ENCODE measurements at regions of chr12 and their contacts with region 1.

Region 1: GRCh38 chr12:10501031-10501430 is 4.7 kb upstream of the EIF2S3B start:
- DNase-seq: peak in 1 of 2 donors; percentile 31
- ATAC-seq: no peak
- H3K4me3 ChIP-seq: no peak overlapping the region
- H3K4me3 Mint-ChIP-seq: no peak overlapping the region
- H3K27ac ChIP-seq: no peak overlapping the region
- H3K27ac Mint-ChIP-seq: no peak overlapping the region
- H3K4me1 ChIP-seq: peaks cover 7% of the 10 kb centered on the region
- H3K4me1 Mint-ChIP-seq: peaks cover 28% of the 10 kb centered on the region in 2 donors
- H3K27me3 ChIP-seq: no peaks in the 10 kb centered on the region
- H3K27me3 Mint-ChIP-seq: peaks cover 0 to under 1% of the 10 kb centered on the region in 2 donors
- CTCF ChIP-seq: peak; percentile 28

Region 2: DNA sequence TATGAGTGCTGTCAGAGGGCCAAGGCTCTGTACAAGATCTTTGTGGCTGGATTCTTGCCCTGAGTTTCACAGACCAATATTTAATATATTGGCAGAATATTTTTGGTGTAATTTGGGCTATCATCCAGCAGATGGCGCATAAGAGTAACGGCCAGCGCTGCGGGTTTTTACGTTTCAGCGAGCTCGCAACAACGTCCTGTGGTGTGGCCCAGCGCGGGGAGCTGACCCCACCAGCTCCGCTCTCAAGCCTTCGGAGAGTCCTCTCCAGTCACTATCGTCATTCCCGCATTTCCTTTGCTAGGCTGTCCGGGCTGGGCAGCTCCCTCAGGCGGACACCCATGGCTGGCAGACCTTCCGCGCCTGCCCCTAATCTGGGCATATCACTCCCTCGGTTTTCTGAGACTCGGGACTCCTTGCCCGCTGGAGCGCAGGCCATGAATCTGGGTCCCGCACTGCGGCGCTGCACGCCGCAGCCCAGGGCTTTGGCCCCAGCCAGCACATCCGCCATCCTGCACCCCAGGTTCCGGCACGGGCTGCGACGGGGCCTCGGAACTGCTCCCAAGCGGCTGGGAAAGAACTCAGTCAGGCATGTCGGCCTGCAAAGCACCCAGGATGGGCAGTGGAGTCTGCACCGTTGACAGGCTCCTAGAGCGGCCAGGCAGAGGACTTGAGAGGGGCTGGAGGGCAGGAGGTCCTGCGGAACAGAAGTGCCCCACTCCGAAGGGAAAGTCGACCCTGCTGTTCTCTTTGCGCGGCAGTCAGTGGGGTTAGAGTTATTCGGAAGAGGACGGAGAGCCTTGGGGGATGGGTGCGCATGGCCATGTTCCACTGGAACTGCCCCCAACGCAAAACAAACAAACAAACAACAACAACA is 347.5 kb before region 1 on chr12:
- intact Hi-C with region 1: loop called (anchors 1 kb)
- DNase-seq: peak; percentile 61 to 79
- ATAC-seq: peak; percentile 83 to 90 (median 88)
- H3K4me3 ChIP-seq: peak overlapping the region; percentile 64
- H3K4me3 Mint-ChIP-seq: peak overlapping the region; percentile 92
- H3K27ac ChIP-seq: peak overlapping the region; percentile 26
- H3K27ac Mint-ChIP-seq: peak overlapping the region in 1 of 2 donors; percentile 85
- H3K4me1 ChIP-seq: peaks cover 14% of the 10 kb centered on the region
- H3K4me1 Mint-ChIP-seq: peaks cover 15% of the 10 kb centered on the region in 2 donors
- H3K27me3 ChIP-seq: peaks cover 3% of the 10 kb centered on the region
- H3K27me3 Mint-ChIP-seq: peaks cover 7 to 11% of the 10 kb centered on the region in 2 donors
- CTCF ChIP-seq: peak; percentile 86

Region 3: DNA sequence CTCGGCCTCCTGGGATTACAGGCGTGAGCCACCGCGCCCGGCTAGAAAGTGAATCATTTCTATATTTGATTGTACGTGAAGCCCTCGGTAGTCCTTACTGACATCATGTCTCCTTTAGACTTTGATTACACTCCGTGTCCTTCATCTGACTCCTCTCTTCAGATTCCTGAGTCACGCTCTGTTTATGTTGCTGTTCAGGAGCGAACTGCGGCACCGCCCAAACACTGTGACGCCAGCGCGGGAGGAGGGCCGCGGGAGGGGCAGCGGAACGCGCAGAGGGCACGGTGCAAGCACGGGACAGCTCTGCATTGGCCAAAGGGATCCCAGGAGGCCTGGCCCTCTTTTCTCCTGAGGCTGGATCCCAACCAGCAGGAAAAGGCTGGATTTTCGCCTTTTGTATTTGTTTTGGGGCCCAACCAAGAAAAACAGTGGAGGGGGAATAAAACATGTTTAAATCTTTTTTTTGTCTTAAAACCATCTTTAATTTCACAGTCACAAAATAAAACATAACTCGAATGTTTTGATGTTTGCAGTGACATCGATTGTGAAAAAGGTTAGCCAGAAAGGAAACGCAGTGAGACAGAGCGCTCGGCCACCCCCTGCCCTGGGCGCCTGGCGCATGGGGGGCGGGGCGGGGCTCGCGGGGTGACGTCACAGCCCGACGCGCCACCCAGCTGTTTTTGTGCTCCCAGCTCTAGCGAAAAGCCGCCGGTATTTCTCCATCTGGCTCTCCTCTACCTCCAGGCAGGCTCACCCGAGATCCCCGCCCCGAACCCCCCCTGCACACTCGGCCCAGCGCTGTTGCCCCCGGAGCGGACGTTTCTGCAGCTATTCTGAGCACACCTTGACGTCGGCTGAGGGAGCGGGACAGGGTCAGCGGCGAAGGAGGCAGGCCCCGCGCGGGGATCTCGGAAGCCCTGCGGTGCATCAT is 288.6 kb before region 1 on chr12 and contains the start of gene GABARAPL1:
- intact Hi-C with region 1: loop called (anchors 5 kb)
- DNase-seq: peak; percentile 88 to 92
- ATAC-seq: peak; percentile 68 to 85 (median 72)
- H3K4me3 ChIP-seq: peak within 1 kb of the TSS; percentile 97
- H3K4me3 Mint-ChIP-seq: peak within 1 kb of the TSS; percentile 95
- H3K27ac ChIP-seq: peak within 1 kb of the TSS; percentile 99
- H3K27ac Mint-ChIP-seq: peak within 1 kb of the TSS; percentile 91 to 97
- H3K4me1 ChIP-seq: peaks cover 38% of the 10 kb centered on the region
- H3K4me1 Mint-ChIP-seq: peaks cover 32 to 34% of the 10 kb centered on the region in 2 donors
- H3K27me3 ChIP-seq: no peaks in the 10 kb centered on the region
- H3K27me3 Mint-ChIP-seq: no peaks in the 10 kb centered on the region
- CTCF ChIP-seq: no peak
- total RNA-seq, gene GABARAPL1: 157 to 233 (median 160) TPM

Region 4: GRCh38 chr12:10235761-10236631 is 265.0 kb before region 1 on chr12:
- intact Hi-C with region 1: loop called (anchors 5 kb)
- DNase-seq: peak; percentile 53 to 83
- ATAC-seq: peak; percentile 76 to 84 (median 77)
- H3K4me3 ChIP-seq: no peak overlapping the region
- H3K4me3 Mint-ChIP-seq: peak overlapping the region; percentile 56
- H3K27ac ChIP-seq: peak overlapping the region; percentile 51
- H3K27ac Mint-ChIP-seq: peak overlapping the region; percentile 85 to 89
- H3K4me1 ChIP-seq: peaks cover 26% of the 10 kb centered on the region
- H3K4me1 Mint-ChIP-seq: peaks cover 57% of the 10 kb centered on the region in 2 donors
- H3K27me3 ChIP-seq: no peaks in the 10 kb centered on the region
- H3K27me3 Mint-ChIP-seq: no peaks in the 10 kb centered on the region
- CTCF ChIP-seq: peak; percentile 96

Region 5: DNA sequence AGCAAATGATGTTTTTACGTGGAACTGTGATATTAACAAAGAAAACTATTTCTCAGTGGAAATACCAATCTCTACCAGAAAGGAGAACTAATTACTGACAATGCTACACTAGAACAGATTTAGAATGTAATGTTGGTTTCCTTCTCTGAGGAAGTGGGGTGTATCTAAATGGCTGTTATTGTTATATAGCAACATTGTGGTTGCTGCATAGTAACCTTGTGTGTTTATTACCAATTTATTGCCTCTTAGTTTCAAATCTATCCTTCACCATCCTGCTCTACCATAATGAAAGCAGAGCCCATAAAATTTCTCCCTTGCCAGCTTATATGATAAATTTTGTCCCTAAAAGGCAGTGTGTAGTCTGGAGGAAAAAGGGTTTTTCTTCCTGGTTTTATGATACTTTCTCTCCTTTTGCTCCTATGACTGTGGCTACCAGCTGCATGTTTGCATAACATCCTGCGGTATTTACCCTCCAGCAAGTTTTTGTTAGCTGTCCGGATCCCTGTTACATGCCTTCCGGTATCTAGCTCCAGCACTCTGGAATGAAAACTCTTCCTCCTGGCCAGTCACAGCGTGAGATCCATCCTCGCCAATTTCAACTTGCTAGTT is 105.5 kb before region 1 on chr12:
- intact Hi-C with region 1: loop called (anchors 5 kb)
- DNase-seq: peak in 1 of 2 donors; percentile 75
- ATAC-seq: peak; percentile 52 to 82 (median 75)
- H3K4me3 ChIP-seq: peak overlapping the region; percentile 5
- H3K4me3 Mint-ChIP-seq: peak overlapping the region; percentile 87
- H3K27ac ChIP-seq: peak overlapping the region; percentile 92
- H3K27ac Mint-ChIP-seq: peak overlapping the region; percentile 97 to 98
- H3K4me1 ChIP-seq: peaks cover 42% of the 10 kb centered on the region
- H3K4me1 Mint-ChIP-seq: peaks cover 63 to 68% of the 10 kb centered on the region in 2 donors
- H3K27me3 ChIP-seq: no peaks in the 10 kb centered on the region
- H3K27me3 Mint-ChIP-seq: no peaks in the 10 kb centered on the region
- CTCF ChIP-seq: no peak

Region 6: DNA sequence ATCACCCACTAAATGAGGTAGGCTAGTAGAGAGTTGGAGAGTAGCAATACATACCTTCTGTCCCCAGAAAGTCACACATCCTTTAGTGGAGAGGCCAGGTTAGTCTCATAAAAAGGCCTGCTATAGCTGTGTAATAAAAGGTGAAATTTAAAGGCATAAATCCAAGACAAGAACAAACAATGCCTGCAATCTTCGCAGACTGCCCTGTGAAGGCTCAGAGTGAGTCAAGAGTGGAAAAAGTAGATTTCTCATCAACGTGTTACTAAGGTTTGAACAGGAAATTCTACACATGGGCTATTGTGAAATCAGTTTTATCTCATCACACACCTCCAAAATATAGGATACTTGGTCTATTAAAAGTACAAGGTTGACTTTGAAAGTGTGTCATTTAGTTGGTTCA is 47.9 kb before region 1 on chr12 and contains the start of gene KLRC1:
- intact Hi-C with region 1: loop called (anchors 1 kb)
- DNase-seq: peak in 1 of 2 donors; percentile 26
- ATAC-seq: peak; percentile 59 to 75 (median 75)
- H3K4me3 ChIP-seq: peak within 1 kb of the TSS; percentile 55
- H3K4me3 Mint-ChIP-seq: peak within 1 kb of the TSS; percentile 67
- H3K27ac ChIP-seq: peak within 1 kb of the TSS; percentile 39
- H3K27ac Mint-ChIP-seq: peak within 1 kb of the TSS; percentile 52 to 90
- H3K4me1 ChIP-seq: peaks cover 18% of the 10 kb centered on the region
- H3K4me1 Mint-ChIP-seq: peaks cover 16 to 45% of the 10 kb centered on the region in 2 donors
- H3K27me3 ChIP-seq: no peaks in the 10 kb centered on the region
- H3K27me3 Mint-ChIP-seq: no peaks in the 10 kb centered on the region
- CTCF ChIP-seq: no peak
- total RNA-seq, gene KLRC1: 30.0 to 180 (median 83.1) TPM

Region 7: DNA sequence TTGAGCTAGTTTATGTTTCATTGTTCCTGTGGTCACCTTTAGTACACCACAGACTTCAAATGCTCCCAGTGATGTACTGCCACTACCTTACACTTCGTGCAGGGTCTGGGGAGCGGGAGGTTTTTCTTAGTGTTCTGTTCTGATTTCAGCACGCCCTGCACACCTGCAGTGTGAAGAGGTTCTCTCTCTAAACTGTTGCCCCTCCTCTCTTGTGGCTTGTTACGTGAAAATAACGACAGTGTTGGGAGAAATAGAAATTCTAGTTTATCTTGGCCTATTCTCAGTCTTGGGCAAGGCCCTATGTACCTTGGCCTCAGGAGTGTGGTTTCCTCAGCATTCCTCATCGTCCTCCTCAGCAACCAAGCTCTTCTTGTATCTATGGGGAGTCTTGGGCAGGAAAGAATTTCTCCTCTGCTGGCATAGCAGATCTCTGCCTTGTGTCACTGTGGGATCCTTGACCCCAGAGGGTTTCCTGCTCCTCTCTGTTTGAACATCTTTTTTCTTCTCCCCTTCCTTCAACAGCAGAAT is 53.3 kb after region 1 on chr12:
- intact Hi-C with region 1: loop called (anchors 5 kb)
- DNase-seq: peak in 1 of 2 donors; percentile 66
- ATAC-seq: peak; percentile 45 to 64 (median 49)
- H3K4me3 ChIP-seq: no peak overlapping the region
- H3K4me3 Mint-ChIP-seq: peak overlapping the region; percentile 90
- H3K27ac ChIP-seq: peak overlapping the region; percentile 85
- H3K27ac Mint-ChIP-seq: peak overlapping the region; percentile 93 to 97
- H3K4me1 ChIP-seq: peaks cover 28% of the 10 kb centered on the region
- H3K4me1 Mint-ChIP-seq: peaks cover 51 to 58% of the 10 kb centered on the region in 2 donors
- H3K27me3 ChIP-seq: no peaks in the 10 kb centered on the region
- H3K27me3 Mint-ChIP-seq: no peaks in the 10 kb centered on the region
- CTCF ChIP-seq: no peak

Region 8: GRCh38 chr12:10829994-10830393 is 329.0 kb after region 1 on chr12:
- intact Hi-C with region 1: no loop called
- DNase-seq: no peak
- ATAC-seq: no peak
- H3K4me3 ChIP-seq: no peak overlapping the region
- H3K4me3 Mint-ChIP-seq: no peak overlapping the region
- H3K27ac ChIP-seq: no peak overlapping the region
- H3K27ac Mint-ChIP-seq: no peak overlapping the region
- H3K4me1 ChIP-seq: no peaks in the 10 kb centered on the region
- H3K4me1 Mint-ChIP-seq: no peaks in the 10 kb centered on the region
- H3K27me3 ChIP-seq: no peaks in the 10 kb centered on the region
- H3K27me3 Mint-ChIP-seq: no peaks in the 10 kb centered on the region
- CTCF ChIP-seq: no peak